Activated B cell treated with CpG ODN at 0.5 μM for 24 hours (primary cell): ENCODE measurements at regions of chr6 and their contacts with region 1.

Region 1: GRCh38 chr6:43402820-43403219 is 24.5 kb upstream of the ABCC10 start:
- DNase-seq: no peak
- ATAC-seq: no peak
- H3K4me3 Mint-ChIP-seq: no peak overlapping the region
- H3K27ac Mint-ChIP-seq: no peak overlapping the region
- H3K4me1 Mint-ChIP-seq: peaks cover 4% of the 10 kb centered on the region
- H3K27me3 Mint-ChIP-seq: peaks cover 23% of the 10 kb centered on the region
- CTCF ChIP-seq: no peak

Region 2: DNA sequence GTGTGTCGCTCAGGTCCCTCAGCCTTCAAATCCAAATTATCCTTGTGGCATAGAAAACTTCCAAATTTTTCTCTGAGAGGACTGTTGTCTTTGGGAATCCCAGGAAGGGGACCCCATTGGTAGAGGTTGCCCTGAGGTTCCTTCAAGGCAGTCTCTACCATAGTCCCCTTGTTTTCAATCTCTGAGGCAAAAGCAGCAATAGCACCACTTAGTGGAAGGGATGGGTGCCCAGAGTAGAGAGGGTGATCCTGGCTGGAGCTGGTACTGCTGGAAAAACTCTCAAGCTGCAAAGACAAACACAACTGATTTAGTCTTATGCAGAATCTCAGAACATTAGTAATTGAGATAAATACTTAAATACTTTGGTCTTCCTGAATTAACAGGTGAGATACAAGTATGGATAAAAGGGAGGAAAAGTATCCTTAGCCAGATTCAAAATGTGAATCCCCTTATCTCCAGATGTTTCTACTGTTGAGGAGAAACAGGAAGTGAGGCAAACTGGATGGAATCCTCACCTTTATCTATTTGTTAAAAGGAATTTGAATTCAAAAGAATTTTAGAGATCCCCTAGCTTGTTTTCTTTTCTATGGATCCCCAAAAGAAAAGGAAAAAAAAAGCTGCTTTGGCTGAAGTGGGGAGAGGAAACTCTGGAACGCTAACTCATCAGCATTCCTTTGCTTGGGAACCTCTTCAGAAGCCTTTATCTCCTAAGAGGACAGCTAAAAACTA is 46.8 kb before region 1 on chr6:
- CTCF ChIA-PET with region 1: interaction called, 19 read pairs
- POLR2A ChIA-PET with region 1: interaction called, 3 read pairs
- intact Hi-C with region 1: loop called (anchors 1 kb)
- DNase-seq: no peak
- ATAC-seq: peak; percentile 65
- H3K4me3 Mint-ChIP-seq: no peak overlapping the region
- H3K27ac Mint-ChIP-seq: no peak overlapping the region
- H3K4me1 Mint-ChIP-seq: peaks cover 28% of the 10 kb centered on the region
- H3K27me3 Mint-ChIP-seq: no peaks in the 10 kb centered on the region
- CTCF ChIP-seq: no peak

Region 3: DNA sequence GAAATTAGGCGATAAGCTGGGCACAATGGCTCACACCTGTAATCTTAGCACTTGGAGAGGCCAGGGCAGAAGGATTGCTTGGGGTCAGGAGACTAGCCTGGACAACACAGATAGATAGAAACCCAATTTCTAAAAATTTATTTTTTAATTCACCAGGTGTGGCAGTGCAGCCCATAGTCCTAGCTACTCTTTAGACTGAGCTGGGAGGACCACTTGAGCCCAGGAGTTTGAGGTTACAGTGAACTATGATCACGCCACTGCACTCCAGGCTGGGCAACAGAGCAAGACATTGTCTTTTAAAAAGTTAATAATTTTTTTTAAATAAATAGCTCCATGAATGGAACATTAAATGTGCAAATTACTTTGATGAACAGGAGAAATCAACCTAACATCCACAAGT is 41.6 kb before region 1 on chr6:
- CTCF ChIA-PET with region 1: interaction called, 19 read pairs
- POLR2A ChIA-PET with region 1: interaction called, 15 read pairs
- intact Hi-C with region 1: loop called (anchors 1 kb)
- DNase-seq: no peak
- ATAC-seq: peak; percentile 37
- H3K4me3 Mint-ChIP-seq: no peak overlapping the region
- H3K27ac Mint-ChIP-seq: peak overlapping the region; percentile 7
- H3K4me1 Mint-ChIP-seq: peaks cover 55% of the 10 kb centered on the region
- H3K27me3 Mint-ChIP-seq: no peaks in the 10 kb centered on the region
- CTCF ChIP-seq: no peak

Region 4: DNA sequence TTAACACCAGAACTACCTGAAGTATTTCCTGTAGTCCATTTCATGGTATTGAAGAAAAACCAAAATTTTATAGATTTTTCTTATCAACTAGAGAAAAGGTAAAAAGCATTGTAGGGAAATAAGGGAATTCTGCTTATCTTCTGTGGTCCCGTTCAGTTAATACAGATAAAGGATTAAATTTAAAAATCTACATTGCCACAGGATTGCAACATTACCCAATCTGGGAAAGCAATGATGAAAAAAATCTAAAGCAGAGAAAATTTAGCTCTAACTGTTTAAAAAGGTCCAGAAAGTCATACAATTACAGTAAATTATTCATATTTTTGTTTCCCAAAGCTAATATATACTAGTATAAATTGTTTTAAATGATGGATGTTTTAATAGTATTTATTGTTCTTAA is 191.1 kb after region 1 on chr6:
- CTCF ChIA-PET with region 1: no interaction called
- POLR2A ChIA-PET with region 1: no interaction called
- intact Hi-C with region 1: no loop called
- DNase-seq: no peak
- ATAC-seq: no peak
- H3K4me3 Mint-ChIP-seq: no peak overlapping the region
- H3K27ac Mint-ChIP-seq: no peak overlapping the region
- H3K4me1 Mint-ChIP-seq: no peaks in the 10 kb centered on the region
- H3K27me3 Mint-ChIP-seq: no peaks in the 10 kb centered on the region
- CTCF ChIP-seq: no peak